ENCODE measurements at regions of chr5 and their contacts with region 1.

Region 1: DNA sequence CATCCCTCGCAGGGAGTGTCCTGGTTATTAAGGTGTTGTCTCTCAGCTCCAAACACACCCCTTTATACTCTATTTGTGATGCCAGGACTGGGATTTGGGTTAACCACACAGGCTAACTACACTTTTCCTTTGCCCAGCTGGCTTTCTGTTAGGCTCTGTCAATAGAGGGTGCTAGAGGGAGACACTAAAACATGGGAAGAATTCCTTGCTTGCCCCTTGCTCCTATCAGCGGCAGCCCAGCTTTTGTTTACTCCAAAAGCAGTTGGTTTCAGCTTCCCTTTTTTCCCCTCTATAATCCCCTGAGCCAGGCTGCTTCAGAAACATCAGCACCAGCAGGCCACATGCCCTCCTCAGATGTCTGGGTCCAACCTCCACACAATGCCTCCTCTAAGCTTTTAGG is 297.1 kb downstream of the KCTD16 start:
- DNase-seq: no peak
- H3K4me3 ChIP-seq: no peak overlapping the region
- H3K27ac ChIP-seq: no peak overlapping the region
- H3K4me1 ChIP-seq: no peaks in the 10 kb centered on the region
- H3K27me3 ChIP-seq: no peaks in the 10 kb centered on the region
- CTCF ChIP-seq: peak; percentile 44; the same call in 1 of the 2 replicates

Region 2: GRCh38 chr5:145163876-145164275 is 696.1 kb after region 1 on chr5:
- CTCF ChIA-PET with region 1: no interaction called
- POLR2A ChIA-PET with region 1: interaction called, 12 read pairs
- intact Hi-C with region 1: no loop called
- DNase-seq: no peak
- H3K4me3 ChIP-seq: no peak overlapping the region
- H3K27ac ChIP-seq: no peak overlapping the region
- H3K4me1 ChIP-seq: peaks cover 10% of the 10 kb centered on the region
- H3K27me3 ChIP-seq: no peaks in the 10 kb centered on the region
- CTCF ChIP-seq: no peak

Region 3: DNA sequence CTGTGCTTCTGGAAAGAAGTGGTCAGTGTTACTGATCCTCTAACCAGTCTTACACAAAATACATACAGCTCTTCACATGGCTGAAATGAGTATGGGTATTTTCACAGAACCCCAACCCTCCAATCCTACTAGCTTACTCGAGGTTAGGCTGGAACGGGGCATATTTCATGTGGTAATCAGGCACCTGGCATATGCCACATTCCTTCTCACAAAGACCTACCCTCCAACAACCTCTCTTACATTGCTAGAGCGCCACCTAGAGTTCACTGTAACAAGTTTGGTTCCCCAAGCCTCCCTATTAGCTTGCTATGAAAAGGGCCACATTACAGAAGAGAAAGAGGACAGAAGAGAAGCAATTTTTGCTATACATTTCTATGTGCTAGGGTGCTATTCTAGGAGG is 770.1 kb after region 1 on chr5:
- CTCF ChIA-PET with region 1: no interaction called
- POLR2A ChIA-PET with region 1: no interaction called
- intact Hi-C with region 1: loop called (anchors 5 kb)
- DNase-seq: peak in 1 of 2 experiments; percentile 37
- H3K4me3 ChIP-seq: no peak overlapping the region
- H3K27ac ChIP-seq: no peak overlapping the region
- H3K4me1 ChIP-seq: no peaks in the 10 kb centered on the region
- H3K27me3 ChIP-seq: no peaks in the 10 kb centered on the region
- CTCF ChIP-seq: peak; percentile 77

Region 4: DNA sequence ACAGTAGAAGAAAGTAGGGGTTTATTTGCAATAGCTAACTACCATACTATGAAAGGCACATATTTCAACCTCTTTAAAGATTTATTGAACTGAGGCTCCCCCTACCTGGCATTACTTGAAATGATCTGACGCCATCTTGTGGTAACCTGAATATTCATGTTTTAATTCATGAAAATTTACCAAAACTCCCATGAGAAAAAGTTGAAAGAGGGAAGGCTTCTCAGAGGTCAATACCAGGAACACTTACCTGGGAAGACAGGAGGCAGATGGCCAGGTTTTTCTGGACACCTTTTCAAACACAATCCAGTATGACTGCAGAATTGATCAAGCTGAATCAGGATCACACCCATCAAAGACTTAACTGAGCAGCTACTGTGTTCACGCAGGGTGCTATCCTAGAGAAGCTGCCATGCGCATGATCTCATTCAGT is 1358.0 kb after region 1 on chr5:
- CTCF ChIA-PET with region 1: no interaction called
- POLR2A ChIA-PET with region 1: no interaction called
- intact Hi-C with region 1: loop called (anchors 10 kb)
- DNase-seq: peak in 1 of 2 experiments; percentile 40
- H3K4me3 ChIP-seq: no peak overlapping the region
- H3K27ac ChIP-seq: no peak overlapping the region
- H3K4me1 ChIP-seq: peaks cover 11% of the 10 kb centered on the region
- H3K27me3 ChIP-seq: no peaks in the 10 kb centered on the region
- CTCF ChIP-seq: peak; percentile 88

Measured in PC-9 (cell line).